Esophagus muscularis mucosa (tissue), 4 donors: ENCODE measurements at regions of chr3 and their contacts with region 1.

Region 1: GRCh38 chr3:194259982-194260766 is 91.0 kb downstream of the CPN2 start:
- DNase-seq: no peak
- H3K4me3 ChIP-seq: no peak overlapping the region
- H3K27ac ChIP-seq: no peak overlapping the region
- H3K4me1 ChIP-seq: peaks cover 6 to 16% (median 9%) of the 10 kb centered on the region in 4 donors
- H3K27me3 ChIP-seq: no peaks in the 10 kb centered on the region
- CTCF ChIP-seq: no peak
- EP300 ChIP-seq: no peak
- POLR2A ChIP-seq: no peak

Region 2: GRCh38 chr3:194204042-194204987 is 55.9 kb before region 1 on chr3:
- intact Hi-C with region 1: loop called (anchors 5 kb)
- DNase-seq: no peak
- H3K4me3 ChIP-seq: peak overlapping the region; percentile 41 to 43 (median 42)
- H3K27ac ChIP-seq: no peak overlapping the region
- H3K4me1 ChIP-seq: peaks cover 0 to 39% (median 25%) of the 10 kb centered on the region in 4 donors
- H3K27me3 ChIP-seq: peaks cover 0 to 21% (median 9%) of the 10 kb centered on the region in 4 donors
- CTCF ChIP-seq: no peak
- EP300 ChIP-seq: no peak
- POLR2A ChIP-seq: no peak